SK-N-SH (cell line): ENCODE measurements at regions of chr14 and their contacts with region 1.

Region 1: DNA sequence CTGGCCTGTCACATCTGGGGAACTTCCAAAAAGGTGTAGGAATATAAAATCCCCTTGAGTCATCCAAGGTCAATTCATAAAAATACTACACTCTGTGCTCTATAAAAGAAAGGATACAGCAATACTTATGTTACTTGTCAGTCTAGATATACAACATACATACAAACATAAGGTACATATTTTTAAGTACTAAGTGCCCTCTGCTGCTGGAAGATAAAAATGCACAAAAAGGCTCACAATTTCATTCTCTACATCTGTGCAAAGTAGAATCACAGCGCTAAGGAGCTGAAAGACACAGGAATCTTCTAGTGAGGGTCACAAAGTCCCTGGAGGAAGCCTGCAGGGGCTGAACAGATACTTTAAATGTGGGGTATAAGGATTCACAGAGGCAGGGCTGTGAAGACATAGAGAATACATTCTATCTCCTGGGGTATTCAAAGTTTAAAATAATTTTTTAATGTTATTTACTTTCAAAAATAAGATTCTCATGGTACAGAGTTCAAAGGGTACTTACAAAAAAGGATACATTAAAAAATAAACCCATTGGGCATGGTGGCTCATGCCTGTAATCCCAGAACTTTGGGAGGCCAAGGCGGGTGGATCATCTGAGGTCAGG is 10.2 kb upstream of the GOLGA5 start:
- DNase-seq: peak; percentile 44
- H3K4me3 ChIP-seq: no peak overlapping the region
- H3K27ac ChIP-seq: no peak overlapping the region
- H3K4me1 ChIP-seq: no peaks in the 10 kb centered on the region
- H3K27me3 ChIP-seq: no peaks in the 10 kb centered on the region
- CTCF ChIP-seq: peak; percentile 75
- EP300 ChIP-seq: no peak
- RAD21 ChIP-seq: peak; percentile 87

Region 2: DNA sequence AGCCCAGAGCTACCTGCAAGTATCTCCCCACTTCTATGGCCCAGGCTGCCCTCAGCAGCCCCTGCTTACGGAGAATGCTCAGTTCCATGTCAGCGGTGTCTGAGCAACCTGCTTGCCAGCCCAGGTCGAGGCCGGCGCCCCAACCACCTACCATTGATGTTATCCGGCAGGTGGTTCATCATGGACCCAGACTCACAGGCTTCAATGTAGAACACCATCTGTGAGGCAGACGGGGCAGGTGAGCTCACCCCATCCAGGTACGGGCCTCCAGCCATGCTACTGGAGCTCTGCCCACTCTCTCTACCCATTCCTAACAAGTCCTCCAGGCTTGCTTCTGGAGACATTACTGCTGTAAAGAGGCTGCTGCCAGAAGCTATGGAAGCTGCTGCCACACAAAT is 71.3 kb before region 1 on chr14:
- CTCF ChIA-PET with region 1: interaction called, 22 read pairs
- POLR2A ChIA-PET with region 1: no interaction called
- DNase-seq: no peak
- H3K4me3 ChIP-seq: no peak overlapping the region
- H3K27ac ChIP-seq: no peak overlapping the region
- H3K4me1 ChIP-seq: 0 out of 4 replicates have a peak, but pooled peaks cover 0 to 8% of the 10 kb centered on the region in 2 experiments
- H3K27me3 ChIP-seq: no peaks in the 10 kb centered on the region
- CTCF ChIP-seq: no peak
- EP300 ChIP-seq: no peak
- RAD21 ChIP-seq: no peak

Region 3: GRCh38 chr14:92719890-92720323 is 64.0 kb before region 1 on chr14:
- CTCF ChIA-PET with region 1: interaction called, 11 read pairs
- POLR2A ChIA-PET with region 1: no interaction called
- DNase-seq: no peak
- H3K4me3 ChIP-seq: no peak overlapping the region
- H3K27ac ChIP-seq: no peak overlapping the region
- H3K4me1 ChIP-seq: no peaks in the 10 kb centered on the region
- H3K27me3 ChIP-seq: no peaks in the 10 kb centered on the region
- CTCF ChIP-seq: no peak
- EP300 ChIP-seq: no peak
- RAD21 ChIP-seq: no peak

Region 4: DNA sequence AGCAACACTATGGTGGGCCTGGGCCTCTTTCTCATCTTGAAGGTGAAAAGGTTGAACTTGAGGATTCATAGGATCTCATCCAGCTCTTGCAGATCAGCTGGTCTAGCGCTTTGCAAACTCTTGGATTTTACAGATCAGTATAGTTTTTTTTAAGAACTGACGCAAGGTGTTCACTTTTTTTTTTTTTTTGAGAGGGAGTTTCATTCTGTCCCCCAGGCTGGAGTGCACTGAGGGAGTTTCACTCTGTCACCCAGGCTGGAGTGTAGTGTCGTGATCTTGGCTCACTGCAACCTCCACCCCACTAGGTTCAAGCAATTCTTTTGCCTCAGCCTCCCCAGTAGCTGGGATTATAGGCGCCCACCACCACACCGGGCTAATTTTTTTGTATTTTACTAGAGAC is 15.1 kb before region 1 on chr14:
- CTCF ChIA-PET with region 1: interaction called, 10 read pairs
- POLR2A ChIA-PET with region 1: no interaction called
- DNase-seq: no peak
- H3K4me3 ChIP-seq: no peak overlapping the region
- H3K27ac ChIP-seq: no peak overlapping the region
- H3K4me1 ChIP-seq: no peaks in the 10 kb centered on the region
- H3K27me3 ChIP-seq: no peaks in the 10 kb centered on the region
- CTCF ChIP-seq: no peak
- EP300 ChIP-seq: no peak
- RAD21 ChIP-seq: no peak

Region 5: DNA sequence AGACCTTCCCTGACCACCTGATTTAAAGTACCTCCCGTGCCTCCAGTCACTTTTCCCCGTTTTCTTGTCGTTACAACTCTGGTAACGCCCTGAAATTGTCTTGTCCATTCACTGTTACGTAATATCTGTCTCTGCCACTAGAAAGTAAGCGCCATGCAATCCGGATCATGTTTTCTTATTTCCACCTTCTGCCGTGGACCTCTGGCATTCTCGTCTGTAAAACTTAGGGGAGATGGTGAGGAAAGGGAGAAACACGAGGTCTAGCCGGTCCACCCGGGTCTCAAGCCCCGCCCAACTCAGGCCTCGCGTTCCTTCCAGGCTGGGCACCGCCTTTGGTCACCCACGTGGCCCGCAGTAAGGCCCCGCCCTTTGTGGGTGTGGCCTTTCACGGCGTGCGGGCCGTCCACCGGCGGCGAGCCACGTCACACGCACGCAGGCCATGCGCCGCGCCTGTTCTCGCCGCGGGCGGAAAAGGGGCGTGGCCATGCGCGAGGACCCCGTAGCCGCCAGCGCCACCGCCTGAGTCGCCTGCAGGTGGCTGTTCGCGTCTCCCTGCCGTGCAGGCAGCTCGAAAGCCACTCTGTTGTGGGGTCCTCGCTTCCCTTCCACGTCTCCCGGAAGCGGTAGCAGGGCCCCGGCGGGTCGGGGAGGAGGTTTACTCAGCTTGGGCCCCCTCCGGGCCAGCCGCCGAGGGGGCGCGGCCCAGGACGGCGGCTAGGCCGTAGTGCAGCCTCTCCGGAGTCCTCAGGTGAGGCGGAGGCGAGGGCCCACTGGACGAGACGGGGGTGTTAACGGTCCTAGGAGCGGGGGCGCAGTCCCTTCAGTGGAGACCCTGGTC is 10.0 kb after region 1 on chr14 and contains the start of gene GOLGA5:
- CTCF ChIA-PET with region 1: interaction called, 12 read pairs
- POLR2A ChIA-PET with region 1: no interaction called
- DNase-seq: peak; percentile 95
- H3K4me3 ChIP-seq: peak within 1 kb of the TSS; percentile 83 to 99
- H3K27ac ChIP-seq: peak within 1 kb of the TSS; percentile 82 to 87
- H3K4me1 ChIP-seq: peaks cover 0 to 8% of the 10 kb centered on the region in 2 experiments; a peak in 2 of 4 replicates
- H3K27me3 ChIP-seq: no peaks in the 10 kb centered on the region
- CTCF ChIP-seq: no peak
- EP300 ChIP-seq: no peak
- RAD21 ChIP-seq: no peak
- polyA plus RNA-seq, gene GOLGA5: 25.6 and 29.1 TPM in 2 replicates